Sigmoid colon (tissue), 7 donors: ENCODE measurements at regions of chr4 and their contacts with region 1.

Region 1: GRCh38 chr4:41214136-41214824 is at the start of gene APBB2:
- DNase-seq: peak; percentile 98
- H3K4me3 ChIP-seq: peak within 1 kb of the TSS; percentile 65 to 98 (median 86)
- H3K27ac ChIP-seq: peak within 1 kb of the TSS; percentile 87 to 90 (median 89)
- H3K4me1 ChIP-seq: peaks cover 0 to 28% (median 24%) of the 10 kb centered on the region in 4 donors
- H3K27me3 ChIP-seq: no peaks in the 10 kb centered on the region
- CTCF ChIP-seq: peak; percentile 38 to 91 (median 40)
- EP300 ChIP-seq: no peak
- POLR2A ChIP-seq: peak; percentile 66 to 77
- total RNA-seq, gene APBB2: 69.1 to 108 (median 96.3) TPM

Region 2: DNA sequence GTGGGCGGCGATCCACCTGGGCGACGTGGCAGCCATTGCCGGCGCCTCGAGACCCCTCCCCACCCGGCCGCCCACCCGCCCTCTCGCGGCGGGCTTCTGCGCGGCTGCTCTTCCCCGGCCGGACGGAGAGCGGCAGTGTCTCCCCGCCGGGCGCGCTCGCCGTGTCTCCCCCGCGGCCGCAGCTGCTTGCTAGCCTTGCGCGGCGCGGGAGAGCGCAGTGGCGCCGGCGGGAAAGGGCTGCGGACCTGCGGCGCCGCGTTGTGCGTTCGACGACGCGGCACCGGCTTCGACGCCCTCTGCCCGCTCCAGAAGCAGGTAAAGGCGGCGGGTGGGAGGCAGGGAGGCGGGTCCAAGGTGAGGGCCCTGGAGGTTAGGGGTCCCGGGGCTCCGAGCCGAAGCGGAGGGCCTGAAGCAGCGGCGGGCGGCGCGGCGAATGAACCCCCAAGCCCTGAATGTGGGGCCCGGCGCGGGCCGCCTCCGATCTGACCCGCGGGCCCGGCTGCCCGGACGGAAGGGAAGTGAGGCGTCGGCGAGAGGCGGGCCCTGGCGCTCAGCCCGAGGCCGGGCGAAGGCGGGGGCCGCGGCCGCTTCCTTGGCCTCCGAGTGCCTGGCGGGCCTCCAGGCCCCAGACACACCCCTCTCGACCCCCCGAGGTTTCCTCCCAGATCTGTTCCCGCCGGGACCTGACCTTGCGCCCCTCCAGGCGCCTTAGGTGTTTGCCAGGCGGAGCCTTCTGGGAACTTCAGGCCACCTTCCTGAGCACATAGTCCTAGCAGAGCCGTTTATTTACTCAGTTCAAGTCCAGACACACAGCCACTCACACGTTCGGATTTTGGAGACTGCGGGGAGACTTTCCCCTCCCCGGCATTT is 1157.3 kb before region 1 on chr4 and contains the start of gene N4BP2:
- intact Hi-C with region 1: loop called (anchors 10 kb)
- DNase-seq: peak; percentile 89
- H3K4me3 ChIP-seq: peak within 1 kb of the TSS; percentile 76 to 88 (median 86)
- H3K27ac ChIP-seq: peak within 1 kb of the TSS; percentile 98 to 100 (median 100)
- H3K4me1 ChIP-seq: peaks cover 0 to 27% (median 21%) of the 10 kb centered on the region in 4 donors
- H3K27me3 ChIP-seq: no peaks in the 10 kb centered on the region
- CTCF ChIP-seq: peak in 3 of 4 experiments; percentile 21 to 72 (median 25)
- EP300 ChIP-seq: no peak
- POLR2A ChIP-seq: peak; percentile 70 to 73
- total RNA-seq, gene N4BP2: 7.9 to 11.9 (median 9.2) TPM

Region 3: DNA sequence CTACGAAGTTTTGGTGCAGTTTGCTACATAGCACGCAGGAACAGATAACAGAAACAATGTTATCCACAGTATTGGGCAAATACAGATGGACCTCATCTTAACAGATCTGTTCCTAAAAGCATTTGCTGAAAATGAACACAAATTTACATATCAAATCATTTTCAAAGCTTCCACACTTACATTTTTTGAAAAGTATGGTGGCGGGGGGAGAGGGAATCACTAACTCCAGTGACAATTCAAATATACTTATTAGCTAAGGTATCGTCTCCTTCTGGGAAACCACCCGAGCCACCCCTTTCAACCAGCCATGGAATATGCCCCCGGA is 289.5 kb before region 1 on chr4:
- intact Hi-C with region 1: loop called (anchors 1 kb)
- DNase-seq: no peak
- H3K4me3 ChIP-seq: no peak overlapping the region
- H3K27ac ChIP-seq: no peak overlapping the region
- H3K4me1 ChIP-seq: no peaks in the 10 kb centered on the region
- H3K27me3 ChIP-seq: no peaks in the 10 kb centered on the region
- CTCF ChIP-seq: no peak
- EP300 ChIP-seq: no peak
- POLR2A ChIP-seq: no peak

Region 4: DNA sequence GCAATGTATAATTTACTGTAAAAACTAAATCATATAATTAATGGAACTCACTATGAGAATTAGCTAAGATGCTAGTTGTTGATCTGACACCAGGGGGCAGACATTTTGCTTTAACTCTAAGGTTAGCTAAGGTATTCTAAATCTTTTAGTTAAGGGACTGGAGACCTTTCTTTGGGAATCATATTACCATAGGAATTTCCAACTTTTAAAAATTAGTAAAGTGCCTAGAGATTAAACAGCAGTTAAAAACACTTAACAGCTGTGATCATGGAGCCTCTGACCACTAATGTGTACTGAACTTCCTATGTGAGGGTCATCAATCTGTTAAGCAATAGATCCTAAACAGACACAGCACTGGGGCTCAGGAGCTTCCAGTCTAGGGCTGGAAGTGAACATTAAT is 237.9 kb before region 1 on chr4:
- intact Hi-C with region 1: loop called (anchors 1 kb)
- DNase-seq: no peak
- H3K4me3 ChIP-seq: no peak overlapping the region
- H3K27ac ChIP-seq: no peak overlapping the region
- H3K4me1 ChIP-seq: peaks cover 0 to 13% (median 2%) of the 10 kb centered on the region in 4 donors
- H3K27me3 ChIP-seq: no peaks in the 10 kb centered on the region
- CTCF ChIP-seq: peak; percentile 25 to 73 (median 58)
- EP300 ChIP-seq: no peak
- POLR2A ChIP-seq: no peak

Region 5: GRCh38 chr4:41060352-41061334 is 153.6 kb before region 1 on chr4:
- intact Hi-C with region 1: loop called (anchors 2 kb)
- DNase-seq: peak; percentile 89
- H3K4me3 ChIP-seq: peak overlapping the region in 1 of 4 donors; percentile 3
- H3K27ac ChIP-seq: peak overlapping the region in 3 of 4 donors; percentile 70 to 81 (median 77)
- H3K4me1 ChIP-seq: peaks cover 0 to 77% (median 63%) of the 10 kb centered on the region in 4 donors
- H3K27me3 ChIP-seq: no peaks in the 10 kb centered on the region
- CTCF ChIP-seq: no peak
- EP300 ChIP-seq: peak; percentile 79 to 98 (median 92)
- POLR2A ChIP-seq: no peak

Region 6: DNA sequence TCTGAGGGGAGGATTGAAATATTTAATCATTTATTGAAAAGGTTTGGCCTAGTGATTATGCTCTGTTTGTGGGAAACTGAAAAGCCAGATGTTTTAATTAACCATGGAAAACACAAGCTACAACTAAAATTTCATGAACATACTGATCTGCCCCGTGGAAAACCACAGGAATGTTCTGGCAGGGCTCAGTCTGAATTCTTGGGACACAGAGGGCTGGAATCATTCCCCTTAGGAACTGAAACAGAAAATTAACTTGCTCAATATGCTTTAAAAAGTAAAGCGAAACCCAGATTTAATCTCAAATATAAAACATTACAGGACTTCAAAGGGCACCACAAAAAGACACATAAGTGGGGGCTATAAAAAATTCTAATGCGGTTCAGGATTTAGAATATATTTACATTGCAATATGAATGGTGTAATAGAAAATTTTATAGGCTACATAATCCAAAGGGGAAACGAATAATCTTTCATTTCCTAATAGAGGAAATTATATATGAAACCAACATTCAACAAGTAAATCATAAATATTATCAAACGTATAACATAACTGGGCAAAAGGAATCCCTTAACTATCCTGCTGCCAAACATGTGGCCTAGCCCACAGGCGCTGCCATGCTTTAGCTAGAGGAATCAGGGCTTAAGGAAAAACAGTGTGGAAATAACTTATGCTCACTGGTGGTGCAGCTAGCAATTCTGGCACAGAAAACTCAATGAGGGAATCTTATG is 70.8 kb before region 1 on chr4:
- intact Hi-C with region 1: loop called (anchors 5 kb)
- DNase-seq: peak; percentile 88
- H3K4me3 ChIP-seq: peak overlapping the region in 2 of 4 donors; percentile 17 to 21
- H3K27ac ChIP-seq: peak overlapping the region; percentile 82 to 89 (median 87)
- H3K4me1 ChIP-seq: peaks cover 0 to 73% (median 68%) of the 10 kb centered on the region in 4 donors
- H3K27me3 ChIP-seq: no peaks in the 10 kb centered on the region
- CTCF ChIP-seq: no peak
- EP300 ChIP-seq: peak in 3 of 4 donors; percentile 1 to 52 (median 50)
- POLR2A ChIP-seq: no peak